Kidney (tissue), 22 donors: ENCODE measurements at regions of chr4 and their contacts with region 1.

Region 1: DNA sequence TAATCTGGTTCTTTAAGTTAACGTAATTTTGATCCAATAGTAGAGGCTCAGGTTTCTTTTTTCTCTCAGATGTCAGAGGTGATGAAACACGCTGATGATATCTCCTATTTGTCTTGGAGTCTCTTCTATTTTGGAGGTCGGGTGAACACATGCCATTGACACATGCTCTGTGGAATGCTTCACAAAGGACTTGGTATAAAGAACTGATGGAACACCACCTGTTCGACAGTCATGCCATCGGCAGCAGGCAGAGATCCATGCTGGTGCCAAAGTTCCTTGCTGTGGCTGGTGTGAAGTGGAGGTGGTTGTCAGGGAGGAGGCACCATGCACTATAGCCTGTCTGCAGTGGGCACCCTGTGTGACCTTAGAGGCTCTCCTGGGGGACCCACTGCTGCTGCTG is 94.9 kb downstream of the ATP8A1 start:
- DNase-seq: no peak
- H3K4me3 ChIP-seq: no peak overlapping the region
- H3K27ac ChIP-seq: no peak overlapping the region
- H3K4me1 ChIP-seq: no peaks in the 10 kb centered on the region
- H3K27me3 ChIP-seq: no peaks in the 10 kb centered on the region
- CTCF ChIP-seq: no peak

Region 2: GRCh38 chr4:41611881-41612871 is 949.8 kb before region 1 on chr4:
- intact Hi-C with region 1: no loop called
- DNase-seq: peak; percentile 64 to 91 (median 86)
- H3K4me3 ChIP-seq: peak overlapping the region in 1 of 3 donors; percentile 6
- H3K27ac ChIP-seq: peak overlapping the region; percentile 16 to 28
- H3K4me1 ChIP-seq: peaks cover 0 to 18% (median 15%) of the 10 kb centered on the region in 3 donors
- H3K27me3 ChIP-seq: peaks cover 2% of the 10 kb centered on the region
- CTCF ChIP-seq: no peak

Region 3: GRCh38 chr4:42865572-42866189 is 303.7 kb after region 1 on chr4:
- intact Hi-C with region 1: loop called (anchors 5 kb)
- DNase-seq: peak in 4 of 5 donors; percentile 37 to 78 (median 62)
- H3K4me3 ChIP-seq: no peak overlapping the region
- H3K27ac ChIP-seq: no peak overlapping the region
- H3K4me1 ChIP-seq: no peaks in the 10 kb centered on the region
- H3K27me3 ChIP-seq: no peaks in the 10 kb centered on the region
- CTCF ChIP-seq: peak; percentile 74